ENCODE measurements at regions of chr1 and their contacts with region 1.

Region 1: DNA sequence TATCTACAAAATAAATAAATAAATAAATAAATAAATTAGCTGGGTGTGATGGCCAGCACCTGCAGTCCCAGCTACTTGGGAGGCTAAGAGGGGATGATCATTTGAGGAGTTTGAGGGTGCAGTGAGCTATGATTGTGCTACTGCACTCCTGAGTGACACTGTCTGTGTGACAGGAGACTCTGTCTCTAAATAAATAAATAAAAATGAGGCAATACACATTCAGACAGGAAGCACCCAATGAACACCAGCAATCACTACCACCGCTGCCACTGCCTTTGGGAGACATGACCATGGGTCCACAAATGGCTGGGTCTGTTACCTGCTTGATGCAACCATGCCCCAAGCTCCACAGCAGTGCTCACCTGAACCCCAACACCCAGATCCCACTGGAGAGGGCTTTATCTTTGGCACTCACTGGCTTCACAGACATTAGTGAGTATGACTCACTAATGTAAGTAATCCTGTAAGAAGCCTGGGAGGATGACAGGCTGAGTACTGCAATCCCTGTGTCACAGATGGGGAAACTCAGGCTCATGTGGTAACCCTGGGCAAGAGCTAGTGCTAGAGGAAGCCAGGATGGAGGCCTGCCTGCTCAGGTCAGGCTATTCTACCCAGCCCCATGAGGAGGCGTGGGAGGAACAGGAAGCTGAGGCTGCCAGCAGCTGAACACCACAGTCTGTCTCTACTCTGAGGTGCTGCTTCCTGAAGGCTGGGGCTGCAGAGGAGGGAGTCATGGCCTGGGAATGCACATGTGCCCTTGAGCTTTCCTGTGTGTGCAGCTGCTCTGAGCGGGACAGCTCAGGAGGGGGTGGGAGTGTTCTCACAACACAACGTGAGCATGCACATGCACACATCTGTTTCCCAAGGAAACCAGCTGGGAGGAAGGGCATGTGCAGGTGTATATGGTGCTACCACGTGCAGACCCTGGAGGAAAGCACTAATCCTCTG is 43.0 kb downstream of the SLC9A1 start:
- DNase-seq: peak; percentile 51 to 81 (median 67)
- ATAC-seq: peak; percentile 97 to 100 (median 99)
- H3K4me3 ChIP-seq: peak overlapping the region in 1 of 2 donors; percentile 15
- H3K4me3 Mint-ChIP-seq: peak overlapping the region in 2 of 3 donors; percentile 14 to 74
- H3K27ac ChIP-seq: peak overlapping the region; percentile 68
- H3K27ac Mint-ChIP-seq: peak overlapping the region; percentile 89 to 95
- H3K4me1 ChIP-seq: peaks cover 42 to 71% of the 10 kb centered on the region in 2 experiments
- H3K4me1 Mint-ChIP-seq: peaks cover 51 to 69% (median 61%) of the 10 kb centered on the region in 3 donors
- H3K27me3 ChIP-seq: no peaks in the 10 kb centered on the region
- H3K27me3 Mint-ChIP-seq: no peaks in the 10 kb centered on the region

Region 2: DNA sequence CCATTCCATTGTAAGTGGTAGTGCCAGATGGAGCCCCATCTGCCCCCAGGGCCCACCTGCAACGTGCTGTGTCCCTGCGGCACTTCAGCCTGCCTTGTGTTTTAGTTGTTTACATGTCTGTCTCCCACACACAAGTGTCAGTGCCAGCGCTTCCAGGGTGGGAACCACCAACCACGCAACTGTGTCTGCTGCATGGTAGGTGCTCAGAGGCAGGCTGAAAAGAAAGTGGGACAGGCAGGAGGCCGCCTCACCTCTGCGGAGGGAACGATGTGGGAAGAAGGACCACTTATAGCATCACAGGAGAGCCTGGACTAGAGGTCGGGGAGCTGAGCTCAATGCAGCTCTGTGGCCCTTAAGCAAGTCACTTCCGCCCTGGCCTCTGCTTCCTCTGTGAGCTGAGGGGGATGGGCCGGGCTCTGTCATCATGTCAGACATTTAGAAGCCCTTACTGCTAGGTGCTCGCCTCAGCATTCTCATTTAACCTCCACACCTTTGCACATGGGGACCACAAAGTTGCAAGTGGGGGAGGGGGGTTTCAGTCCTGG is 25.2 kb after region 1 on chr1:
- CTCF ChIA-PET with region 1: interaction called in 1 of 2 experiments, 11 read pairs
- POLR2A ChIA-PET with region 1: interaction called in 1 of 2 experiments, 3 read pairs
- DNase-seq: peak; percentile 69 to 90 (median 82)
- ATAC-seq: peak; percentile 94 to 99 (median 98)
- H3K4me3 ChIP-seq: peak overlapping the region; percentile 41 to 42
- H3K4me3 Mint-ChIP-seq: peak overlapping the region; percentile 84 to 91 (median 86)
- H3K27ac ChIP-seq: peak overlapping the region; percentile 99
- H3K27ac Mint-ChIP-seq: peak overlapping the region; percentile 100
- H3K4me1 ChIP-seq: peaks cover 38 to 55% of the 10 kb centered on the region in 2 experiments
- H3K4me1 Mint-ChIP-seq: peaks cover 56 to 62% (median 62%) of the 10 kb centered on the region in 3 donors
- H3K27me3 ChIP-seq: no peaks in the 10 kb centered on the region
- H3K27me3 Mint-ChIP-seq: no peaks in the 10 kb centered on the region

Region 3: GRCh38 chr1:27154991-27155781 is 43.3 kb after region 1 on chr1 and contains the start of gene SLC9A1:
- CTCF ChIA-PET with region 1: interaction called in 1 of 2 experiments, 17 read pairs
- POLR2A ChIA-PET with region 1: interaction called in 1 of 2 experiments, 5 read pairs
- DNase-seq: peak; percentile 85 to 96 (median 91)
- ATAC-seq: peak; percentile 91 to 98 (median 97)
- H3K4me3 ChIP-seq: peak within 1 kb of the TSS; percentile 84 to 95
- H3K4me3 Mint-ChIP-seq: peak within 1 kb of the TSS; percentile 84 to 93 (median 86)
- H3K27ac ChIP-seq: peak within 1 kb of the TSS; percentile 98
- H3K27ac Mint-ChIP-seq: peak within 1 kb of the TSS; percentile 96 to 100
- H3K4me1 ChIP-seq: peaks cover 15 to 44% of the 10 kb centered on the region in 2 experiments
- H3K4me1 Mint-ChIP-seq: peaks cover 48 to 55% (median 49%) of the 10 kb centered on the region in 3 donors
- H3K27me3 ChIP-seq: no peaks in the 10 kb centered on the region
- H3K27me3 Mint-ChIP-seq: no peaks in the 10 kb centered on the region
- total RNA-seq, gene SLC9A1: 14.6 to 24.4 (median 18.5) TPM

Region 4: GRCh38 chr1:27234049-27234882 is 122.4 kb after region 1 on chr1 and contains the start of gene WDTC1:
- CTCF ChIA-PET with region 1: interaction called in 1 of 2 experiments, 10 read pairs
- POLR2A ChIA-PET with region 1: no interaction called
- DNase-seq: peak; percentile 96 to 99 (median 98)
- ATAC-seq: peak; percentile 93 to 96 (median 94)
- H3K4me3 ChIP-seq: peak within 1 kb of the TSS; percentile 64 to 74
- H3K4me3 Mint-ChIP-seq: peak within 1 kb of the TSS; percentile 87 to 97 (median 95)
- H3K27ac ChIP-seq: peak within 1 kb of the TSS; percentile 92
- H3K27ac Mint-ChIP-seq: peak within 1 kb of the TSS; percentile 91 to 92
- H3K4me1 ChIP-seq: peaks cover 16 to 27% of the 10 kb centered on the region in 2 experiments
- H3K4me1 Mint-ChIP-seq: peaks cover 29 to 33% (median 30%) of the 10 kb centered on the region in 3 donors
- H3K27me3 ChIP-seq: no peaks in the 10 kb centered on the region
- H3K27me3 Mint-ChIP-seq: no peaks in the 10 kb centered on the region
- total RNA-seq, gene WDTC1: 39.4 to 55.9 (median 50.7) TPM